ENCODE measurements at regions of chr1 and their contacts with region 1.

Region 1: DNA sequence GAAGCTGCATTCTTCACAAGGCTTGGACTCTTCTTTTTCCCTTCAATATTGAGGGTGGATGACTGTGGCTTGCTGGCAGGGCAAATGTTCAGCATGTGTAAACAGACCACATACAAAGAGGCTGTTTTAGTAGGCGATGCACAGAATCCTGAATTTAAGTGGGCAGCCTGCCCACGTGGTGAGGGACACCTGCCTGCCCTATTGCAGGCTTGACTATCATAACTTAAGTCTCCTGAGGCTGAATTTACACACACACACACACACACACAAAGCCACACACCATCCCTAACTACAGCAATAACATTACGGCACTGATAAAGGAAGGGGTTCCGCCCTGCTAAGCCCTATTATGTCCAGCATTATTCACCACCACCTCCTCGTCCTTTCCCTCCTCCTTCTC is 15.9 kb downstream of the SYT2 start:
- DNase-seq: no peak
- H3K4me3 ChIP-seq: no peak overlapping the region
- CTCF ChIP-seq: no peak
- POLR2A ChIP-seq: no peak

Region 2: GRCh38 chr1:201376464-201377374 is 1317.6 kb before region 1 on chr1:
- intact Hi-C with region 1: no loop called
- DNase-seq: no peak
- H3K4me3 ChIP-seq: no peak overlapping the region
- CTCF ChIP-seq: no peak
- POLR2A ChIP-seq: no peak

Region 3: DNA sequence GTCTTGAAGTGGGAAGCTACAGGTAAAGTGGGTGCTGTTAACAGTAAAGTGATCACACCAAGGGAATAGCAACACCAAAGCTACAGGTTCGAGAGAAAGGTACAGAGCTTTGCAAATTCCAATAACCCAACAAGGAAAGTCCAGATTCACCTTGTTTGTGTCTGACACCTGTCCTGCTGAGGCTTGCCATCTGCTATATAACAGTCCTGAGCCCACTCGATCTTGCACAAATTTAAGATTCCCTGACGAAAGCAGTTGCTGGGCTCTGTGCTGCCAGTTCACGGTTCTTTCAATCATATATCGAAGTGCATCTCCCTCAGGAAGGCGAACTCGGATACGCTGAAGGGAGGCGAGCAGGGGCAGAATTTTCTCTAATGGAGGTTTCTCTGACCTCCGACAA is 38.9 kb after region 1 on chr1:
- intact Hi-C with region 1: loop called (anchors 2 kb)
- DNase-seq: no peak
- H3K4me3 ChIP-seq: no peak overlapping the region
- CTCF ChIP-seq: no peak
- POLR2A ChIP-seq: no peak

Measured in lower leg skin (tissue), 4 donors.